RWPE1 (cell line): ENCODE measurements at regions of chr6 and their contacts with region 1.

Region 1: DNA sequence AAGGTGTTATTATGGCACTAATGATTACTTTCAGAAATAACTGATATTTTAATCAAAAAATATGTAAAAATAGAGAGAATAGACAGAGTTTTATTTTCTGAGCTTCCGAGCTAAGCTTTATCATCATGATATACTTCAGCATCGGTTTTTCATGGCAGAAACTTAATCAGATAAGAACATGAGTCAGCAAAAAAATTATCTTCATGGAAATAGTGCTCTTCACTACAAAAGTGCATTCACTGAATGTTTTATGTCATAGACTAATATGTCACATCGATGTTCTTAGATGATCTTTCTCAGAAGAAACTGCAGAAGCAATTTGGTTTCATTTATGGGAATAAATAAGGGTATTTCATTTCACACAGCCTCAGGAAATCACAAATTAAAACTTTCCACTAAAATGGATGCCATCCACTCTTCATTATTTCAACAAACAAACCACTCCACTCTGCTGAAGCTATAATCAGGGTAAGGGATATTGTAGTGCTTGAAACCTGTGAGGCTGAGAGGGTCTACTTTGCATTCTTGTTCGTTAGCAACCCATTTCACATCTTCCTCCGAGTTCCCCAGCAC is 10.2 kb upstream of the MAP3K7 start:
- DNase-seq: no peak
- H3K27ac ChIP-seq: no peak overlapping the region
- CTCF ChIP-seq: no peak

Region 2: GRCh38 chr6:90583836-90584481 is 13.1 kb before region 1 on chr6:
- CTCF ChIA-PET with region 1: interaction called, 15 read pairs
- POLR2A ChIA-PET with region 1: no interaction called
- DNase-seq: no peak
- H3K27ac ChIP-seq: no peak overlapping the region
- CTCF ChIP-seq: no peak